Caki2 (cell line): ENCODE measurements at regions of chr22 and their contacts with region 1.

Region 1: DNA sequence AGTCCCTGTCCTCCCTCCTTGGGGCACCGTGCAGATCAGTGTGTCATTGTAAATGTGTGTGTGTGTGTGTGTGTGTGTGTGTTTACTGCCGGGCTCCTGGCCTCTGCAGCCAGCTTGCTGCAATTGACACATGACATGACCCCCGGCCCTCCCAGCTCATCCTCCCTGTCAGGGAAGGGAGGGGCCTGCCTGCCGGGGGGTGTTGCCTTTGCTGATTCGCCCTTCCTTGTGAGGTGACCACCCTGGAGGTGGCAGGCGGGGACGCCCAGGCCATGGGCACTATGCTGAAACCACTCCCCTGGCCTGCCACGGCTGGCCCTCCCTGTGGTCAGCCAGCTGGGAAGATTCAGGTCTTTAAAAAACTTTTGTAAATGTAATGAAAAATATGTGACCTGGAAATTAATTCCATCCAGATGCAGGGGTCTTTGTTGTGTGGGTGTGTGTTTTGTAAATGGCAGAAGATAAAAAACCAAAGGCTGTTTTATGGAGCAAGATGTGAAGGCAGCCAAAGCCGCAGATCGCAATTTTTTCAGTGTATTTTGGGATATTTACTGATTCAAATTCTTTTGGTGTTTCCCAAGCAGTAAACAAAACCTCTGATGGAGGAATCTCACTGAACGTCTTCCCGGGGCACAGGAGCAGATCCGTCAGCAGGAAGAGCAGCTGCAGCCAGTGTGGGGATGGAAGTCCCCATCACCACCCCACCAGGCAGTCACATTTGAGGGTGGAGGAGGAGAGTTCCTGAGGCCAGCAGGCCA is 23.2 kb downstream of the SHISAL1 start:
- DNase-seq: peak; percentile 87

Region 2: DNA sequence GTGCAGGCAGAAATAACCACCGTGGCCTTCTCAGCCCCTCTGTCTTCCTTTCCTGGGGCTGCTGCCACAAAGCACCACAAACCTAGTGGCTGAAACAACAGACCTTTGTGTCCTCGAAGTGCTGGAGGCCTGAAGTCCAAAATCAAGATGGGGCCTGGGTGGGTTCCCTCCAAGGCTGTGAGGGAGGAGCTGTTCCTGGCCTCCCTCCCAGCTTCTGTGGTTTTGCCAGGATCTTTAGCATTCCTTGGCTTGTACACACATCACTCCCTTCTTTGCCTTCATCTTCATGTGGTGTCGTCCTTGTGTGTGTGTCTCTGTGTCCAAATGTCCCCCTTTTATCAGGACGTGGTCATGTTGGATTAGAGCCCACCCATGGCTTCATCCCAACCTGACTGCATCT is 137.9 kb before region 1 on chr22:
- in situ Hi-C with region 1: loop called (anchors 10 kb)
- DNase-seq: no peak

Region 3: GRCh38 chr22:44260216-44261035 is 29.2 kb before region 1 on chr22:
- in situ Hi-C with region 1: no loop called
- DNase-seq: no peak